ENCODE measurements at regions of chr1 and their contacts with region 1.

Region 1: DNA sequence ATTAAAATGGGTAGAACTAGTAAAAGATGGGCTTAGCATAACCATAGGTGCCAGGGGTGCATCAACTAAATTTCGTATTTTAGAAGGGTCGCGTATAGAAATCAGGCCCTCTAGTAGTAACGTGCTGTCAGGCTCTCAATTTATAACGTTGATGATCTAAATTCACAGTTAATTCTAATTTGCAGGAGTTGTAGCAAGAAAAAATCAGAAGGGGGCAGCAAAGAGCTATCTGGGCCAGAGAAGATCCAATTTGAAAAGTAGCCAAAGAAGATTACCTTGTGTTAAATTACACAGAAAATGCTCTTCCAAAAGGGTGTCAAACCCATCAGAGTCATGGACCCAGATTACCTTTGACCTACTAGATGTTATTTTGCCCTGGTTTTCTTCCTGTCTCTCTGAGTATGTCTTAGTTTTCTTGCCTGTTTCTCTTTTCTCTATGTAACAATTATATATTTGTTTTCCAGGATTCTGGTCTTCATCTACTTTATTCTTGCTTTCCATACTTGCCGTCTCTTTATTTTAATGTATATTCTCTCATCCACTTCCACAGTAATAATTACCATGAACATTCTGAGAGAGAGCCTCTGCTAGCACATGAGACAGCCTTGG is 1030.9 kb downstream of the AMY1C start:
- DNase-seq: peak in 1 of 2 experiments; percentile 3
- H3K4me3 ChIP-seq: no peak overlapping the region
- H3K27ac ChIP-seq: no peak overlapping the region
- H3K4me1 ChIP-seq: no peaks in the 10 kb centered on the region
- H3K27me3 ChIP-seq: no peaks in the 10 kb centered on the region
- CTCF ChIP-seq: peak; percentile 96

Region 2: GRCh38 chr1:105137543-105138457 is 357.2 kb after region 1 on chr1:
- CTCF ChIA-PET with region 1: no interaction called
- POLR2A ChIA-PET with region 1: no interaction called
- intact Hi-C with region 1: loop called (anchors 2 kb)
- DNase-seq: peak; percentile 18 to 46
- H3K4me3 ChIP-seq: no peak overlapping the region
- H3K27ac ChIP-seq: no peak overlapping the region
- H3K4me1 ChIP-seq: no peaks in the 10 kb centered on the region
- H3K27me3 ChIP-seq: no peaks in the 10 kb centered on the region
- CTCF ChIP-seq: peak; percentile 73

Region 3: DNA sequence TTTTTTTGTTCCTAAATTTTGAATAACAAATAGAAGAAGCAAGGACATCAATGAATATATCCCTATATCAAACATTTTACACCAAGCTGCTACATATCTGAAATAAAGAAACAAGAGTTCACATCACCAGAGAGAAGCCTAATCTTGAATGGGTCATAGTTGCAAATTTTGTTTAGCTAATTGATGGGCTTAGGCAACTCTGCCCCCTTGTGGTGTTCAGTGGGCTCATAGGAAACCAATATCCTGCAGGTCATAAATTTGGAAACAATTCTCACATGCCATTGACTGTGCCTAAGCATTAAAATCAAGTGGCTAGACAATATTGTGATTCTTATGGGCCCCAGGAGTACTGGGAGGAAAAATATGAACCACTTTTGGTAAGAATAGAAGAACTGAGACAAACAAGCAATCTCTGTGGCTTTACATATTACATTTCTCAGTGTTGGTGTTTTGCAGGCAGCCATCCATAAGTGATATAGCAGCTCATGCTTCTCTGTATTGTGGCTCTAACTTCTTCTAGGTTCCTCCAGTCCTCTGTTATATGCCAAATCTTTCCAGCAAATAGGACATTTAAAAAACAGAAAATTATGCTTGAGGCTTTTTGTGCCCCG is 1013.1 kb after region 1 on chr1:
- CTCF ChIA-PET with region 1: interaction called, 3 read pairs
- POLR2A ChIA-PET with region 1: no interaction called
- intact Hi-C with region 1: loop called (anchors 1 kb)
- DNase-seq: peak in 1 of 2 experiments; percentile 25
- H3K4me3 ChIP-seq: no peak overlapping the region
- H3K27ac ChIP-seq: no peak overlapping the region
- H3K4me1 ChIP-seq: no peaks in the 10 kb centered on the region
- H3K27me3 ChIP-seq: no peaks in the 10 kb centered on the region
- CTCF ChIP-seq: peak; percentile 92